Adrenal gland (tissue), 19 donors: ENCODE measurements at regions of chr2 and their contacts with region 1.

Region 1: DNA sequence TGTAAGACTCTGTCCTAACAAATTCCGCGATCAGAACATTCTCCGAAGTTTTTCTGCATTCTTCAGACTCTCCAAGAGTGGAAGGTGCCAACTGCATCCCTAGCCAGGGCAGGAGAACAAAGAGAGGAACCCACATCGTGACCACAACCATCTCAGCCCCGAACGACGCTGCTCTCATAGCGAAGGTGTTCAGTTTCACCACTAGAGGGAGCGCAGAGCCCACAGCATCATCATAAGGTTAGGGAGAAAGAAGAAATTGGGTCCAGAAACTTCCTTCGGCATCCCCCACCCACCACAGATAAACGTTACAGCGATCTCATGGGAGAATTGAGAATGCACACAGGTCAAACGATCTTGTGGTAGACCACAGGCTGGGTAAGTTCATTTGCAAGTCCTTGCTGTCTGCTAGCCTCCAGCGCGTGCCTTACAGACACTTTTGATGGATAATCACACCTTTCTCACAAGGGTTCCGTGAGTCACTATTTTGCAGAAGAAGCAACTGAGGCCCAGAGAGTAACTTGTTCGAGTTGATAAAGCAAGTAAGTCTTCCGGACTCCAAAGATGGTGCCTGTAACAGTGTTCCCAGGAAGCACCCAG is 53.7 kb upstream of the ARL4C start:
- DNase-seq: peak; percentile 61 to 82 (median 67)
- H3K4me3 ChIP-seq: no peak overlapping the region
- H3K27ac ChIP-seq: no peak overlapping the region
- H3K4me1 ChIP-seq: peaks cover 0 to 6% of the 10 kb centered on the region in 2 donors
- H3K27me3 ChIP-seq: peaks cover 5% of the 10 kb centered on the region
- CTCF ChIP-seq: peak; percentile 89 to 99 (median 95)
- POLR2A ChIP-seq: no peak

Region 2: DNA sequence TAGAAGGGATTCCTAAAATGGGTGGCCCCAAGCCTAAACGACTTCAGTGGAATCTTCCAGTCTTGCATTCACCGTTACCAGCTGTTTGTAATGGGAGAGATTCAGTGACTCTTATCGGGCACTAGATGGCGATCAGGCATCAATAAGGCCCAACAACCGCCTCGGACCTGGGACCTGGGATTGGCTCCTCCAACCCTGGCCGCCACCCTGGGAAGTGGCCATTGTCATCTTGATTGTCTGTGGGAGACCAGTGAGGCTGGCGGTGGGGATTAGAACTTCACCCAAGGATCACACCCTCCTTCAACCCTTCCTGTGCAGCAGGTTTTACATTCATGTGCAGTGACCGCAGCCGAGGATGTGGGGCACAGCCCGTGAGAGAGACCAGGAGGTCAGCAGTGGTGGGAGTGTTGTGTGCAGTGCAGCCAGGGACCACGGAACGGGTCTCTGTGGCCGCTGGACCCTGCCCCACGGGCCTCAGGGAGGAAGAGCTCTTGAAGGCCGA is 414.8 kb before region 1 on chr2:
- intact Hi-C with region 1: no loop called
- DNase-seq: peak; percentile 49 to 86 (median 69)
- H3K4me3 ChIP-seq: no peak overlapping the region
- H3K27ac ChIP-seq: no peak overlapping the region
- H3K4me1 ChIP-seq: no peaks in the 10 kb centered on the region
- H3K27me3 ChIP-seq: peaks cover 3% of the 10 kb centered on the region
- CTCF ChIP-seq: peak; percentile 68 to 89 (median 84)
- POLR2A ChIP-seq: no peak

Region 3: DNA sequence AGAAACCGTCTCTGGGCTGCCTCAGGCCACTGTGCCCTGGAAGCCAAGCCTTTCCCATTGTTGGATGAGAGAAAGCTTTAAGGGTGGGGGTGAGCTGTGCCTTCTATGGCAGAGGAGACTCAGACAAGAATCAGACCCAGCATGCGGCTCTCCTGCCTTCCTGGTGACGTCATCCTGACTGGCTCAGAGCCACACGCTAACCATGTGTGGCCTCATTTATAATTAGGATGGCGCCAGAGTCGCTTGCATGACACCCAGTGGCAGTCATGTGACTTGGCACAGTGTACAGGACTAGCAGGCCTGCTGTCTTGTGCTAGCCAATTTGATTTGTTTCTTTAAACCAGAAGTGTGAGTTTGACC is 500.4 kb after region 1 on chr2:
- intact Hi-C with region 1: loop called in 1 of 2 experiments (anchors 5 kb)
- DNase-seq: peak; percentile 66 to 97 (median 85)
- H3K4me3 ChIP-seq: no peak overlapping the region
- H3K27ac ChIP-seq: peak overlapping the region in 2 of 5 donors; percentile 23 to 56
- H3K4me1 ChIP-seq: peaks cover 0 to 11% of the 10 kb centered on the region in 2 donors
- H3K27me3 ChIP-seq: no peaks in the 10 kb centered on the region
- CTCF ChIP-seq: peak in 1 of 6 experiments; percentile 4
- POLR2A ChIP-seq: no peak

Region 4: DNA sequence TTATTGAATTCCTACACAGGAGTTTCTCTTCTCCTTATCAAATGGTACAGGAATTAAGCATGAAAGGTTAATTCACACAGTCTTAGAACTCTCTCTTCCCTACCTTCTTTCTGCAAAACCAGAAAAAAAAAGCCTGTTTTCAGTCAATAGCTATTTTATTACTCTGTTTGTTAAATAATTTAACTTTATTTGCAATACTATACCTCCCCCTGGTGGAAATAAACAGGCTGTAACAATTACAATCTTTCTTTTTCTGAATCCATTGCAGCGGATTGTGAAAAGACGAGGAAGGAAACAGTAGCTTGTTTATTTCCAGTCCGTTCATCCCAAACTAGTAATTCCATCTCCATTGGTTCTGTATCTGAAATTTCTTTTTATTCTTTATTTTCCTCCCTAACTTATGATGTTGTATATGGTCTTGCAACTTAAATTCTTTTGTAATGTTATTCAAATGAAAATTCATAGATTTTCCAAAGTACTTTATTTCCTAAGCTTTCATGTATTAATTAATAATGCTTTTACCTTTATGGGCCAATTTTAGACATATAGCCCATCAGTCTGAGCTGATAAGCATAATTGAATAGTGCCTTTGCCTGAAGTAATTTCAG is 566.4 kb after region 1 on chr2:
- intact Hi-C with region 1: loop called in 1 of 2 experiments (anchors 2 kb)
- DNase-seq: no peak
- H3K4me3 ChIP-seq: no peak overlapping the region
- H3K27ac ChIP-seq: no peak overlapping the region
- H3K4me1 ChIP-seq: no peaks in the 10 kb centered on the region
- H3K27me3 ChIP-seq: no peaks in the 10 kb centered on the region
- CTCF ChIP-seq: peak; percentile 62 to 85 (median 78)
- POLR2A ChIP-seq: no peak